ENCODE measurements at regions of chr1 and their contacts with region 1.

Region 1: DNA sequence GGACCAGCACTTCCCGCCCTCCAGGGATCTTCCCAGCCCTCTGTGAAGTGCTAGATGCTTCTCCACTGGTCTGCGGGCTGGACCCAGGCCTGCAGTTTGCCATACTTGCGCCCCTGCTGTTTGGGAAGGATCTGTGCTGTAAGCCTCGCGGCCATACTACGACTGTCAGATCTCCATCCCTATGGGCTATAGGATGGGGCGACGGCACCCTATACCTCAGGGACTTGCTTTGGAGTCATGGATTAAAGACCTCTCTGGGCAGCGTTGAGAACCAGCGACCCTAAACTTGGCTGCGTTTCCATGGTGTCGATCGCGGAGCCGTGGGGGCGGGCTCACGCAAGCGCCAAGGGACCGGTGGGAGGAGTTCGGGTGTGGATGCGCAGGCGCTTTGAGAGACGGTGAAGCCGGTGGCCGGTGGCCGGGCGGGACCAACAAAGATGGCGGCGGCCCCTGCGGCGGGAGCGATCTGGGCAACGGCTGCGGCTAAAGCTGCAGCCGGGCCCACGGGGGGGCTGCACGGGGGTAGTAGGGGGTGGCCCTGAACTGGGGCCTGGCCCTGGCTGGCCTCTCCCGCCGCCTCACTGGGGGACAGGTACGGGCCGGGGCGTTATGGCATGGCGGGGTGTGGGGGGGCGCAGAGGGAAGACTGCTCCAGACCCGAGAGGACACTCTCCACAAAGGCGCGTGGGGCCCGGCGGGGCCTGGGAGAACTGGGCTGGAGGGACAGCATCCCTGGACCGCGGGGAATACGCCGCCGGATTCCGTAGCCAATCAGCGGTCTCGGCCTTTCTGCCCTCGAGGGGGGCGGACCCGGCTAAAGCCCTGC is at the start of gene USP21:
- DNase-seq: peak; percentile 94
- H3K4me3 Mint-ChIP-seq: peak within 1 kb of the TSS; percentile 82
- H3K27ac Mint-ChIP-seq: peak within 1 kb of the TSS; percentile 86
- H3K4me1 Mint-ChIP-seq: peaks cover 58% of the 10 kb centered on the region
- H3K27me3 Mint-ChIP-seq: no peaks in the 10 kb centered on the region
- total RNA-seq, gene USP21: 35.7 to 36.1 TPM

Region 2: DNA sequence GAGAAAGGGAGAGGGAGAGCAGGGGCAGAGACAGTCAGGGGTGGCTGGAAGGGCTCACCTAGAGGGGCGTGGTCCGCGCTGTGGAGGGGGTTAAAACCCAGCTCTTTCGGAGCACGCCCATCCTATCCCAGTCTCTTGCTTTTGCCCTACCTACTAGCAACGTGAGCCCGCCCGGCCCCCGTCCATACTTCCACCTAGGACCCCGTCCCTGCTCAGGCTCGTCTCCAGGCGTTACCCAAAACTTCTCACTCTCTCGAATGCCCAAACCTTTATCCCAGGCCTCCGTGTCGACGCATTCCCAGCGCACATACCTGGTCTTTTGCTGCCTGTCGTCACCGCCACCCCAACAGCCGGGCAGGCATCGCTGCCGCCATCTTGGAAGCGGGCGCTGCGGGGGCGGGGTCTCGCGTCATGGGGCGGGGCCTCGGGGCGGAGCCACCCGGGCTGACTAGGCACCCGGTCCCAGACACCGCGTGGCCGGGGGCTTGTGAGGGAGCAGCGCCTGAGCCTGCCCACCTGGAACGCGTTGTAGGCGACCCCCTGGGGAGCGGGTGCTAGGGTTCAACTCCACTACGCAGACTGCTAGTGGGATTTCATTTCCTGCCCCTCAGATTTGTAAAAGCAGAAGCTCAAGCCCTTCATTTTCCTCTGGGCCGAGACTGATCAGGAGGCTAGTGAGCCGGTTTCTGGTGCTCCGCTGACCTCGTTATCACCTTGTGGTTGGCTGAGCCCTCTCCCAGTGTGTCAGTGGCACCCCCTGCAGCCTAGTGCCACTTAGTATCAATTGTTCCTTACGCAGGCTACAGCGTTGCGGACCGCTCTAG is 18.0 kb after region 1 on chr1 and contains the start of gene B4GALT3:
- CTCF ChIA-PET with region 1: interaction called, 20 read pairs
- intact Hi-C with region 1: loop called (anchors 2 kb)
- DNase-seq: peak; percentile 97
- H3K4me3 Mint-ChIP-seq: peak within 1 kb of the TSS; percentile 98
- H3K27ac Mint-ChIP-seq: peak within 1 kb of the TSS; percentile 96
- H3K4me1 Mint-ChIP-seq: peaks cover 60% of the 10 kb centered on the region
- H3K27me3 Mint-ChIP-seq: no peaks in the 10 kb centered on the region
- total RNA-seq, gene B4GALT3: 45.7 to 49.0 TPM

Region 3: GRCh38 chr1:161201828-161202725 is 42.8 kb after region 1 on chr1 and contains the start of gene NDUFS2:
- CTCF ChIA-PET with region 1: no interaction called
- intact Hi-C with region 1: loop called (anchors 2 kb)
- DNase-seq: peak; percentile 99
- H3K4me3 Mint-ChIP-seq: peak within 1 kb of the TSS; percentile 92
- H3K27ac Mint-ChIP-seq: peak within 1 kb of the TSS; percentile 89
- H3K4me1 Mint-ChIP-seq: peaks cover 75% of the 10 kb centered on the region
- H3K27me3 Mint-ChIP-seq: no peaks in the 10 kb centered on the region
- total RNA-seq, gene NDUFS2: 126 to 130 TPM

Measured in activated naive CD4-positive, alpha-beta T cell treated with anti-CD3 and anti-CD28 coated beads for 36 hours (primary cell).